ENCODE measurements at regions of chr1 and their contacts with region 1.

Region 1: GRCh38 chr1:116763787-116764465 is 9.7 kb downstream of the CD2 start:
- DNase-seq: no peak
- H3K4me3 Mint-ChIP-seq: peak overlapping the region; percentile 84
- H3K27ac Mint-ChIP-seq: peak overlapping the region; percentile 100
- H3K4me1 Mint-ChIP-seq: peaks cover 88% of the 10 kb centered on the region
- H3K27me3 Mint-ChIP-seq: no peaks in the 10 kb centered on the region

Region 2: GRCh38 chr1:116806245-116806644 is 42.3 kb after region 1 on chr1:
- intact Hi-C with region 1: loop called (anchors 1 kb)
- DNase-seq: peak; percentile 36
- H3K4me3 Mint-ChIP-seq: peak overlapping the region; percentile 79
- H3K27ac Mint-ChIP-seq: peak overlapping the region; percentile 90
- H3K4me1 Mint-ChIP-seq: peaks cover 84% of the 10 kb centered on the region
- H3K27me3 Mint-ChIP-seq: no peaks in the 10 kb centered on the region

Region 3: DNA sequence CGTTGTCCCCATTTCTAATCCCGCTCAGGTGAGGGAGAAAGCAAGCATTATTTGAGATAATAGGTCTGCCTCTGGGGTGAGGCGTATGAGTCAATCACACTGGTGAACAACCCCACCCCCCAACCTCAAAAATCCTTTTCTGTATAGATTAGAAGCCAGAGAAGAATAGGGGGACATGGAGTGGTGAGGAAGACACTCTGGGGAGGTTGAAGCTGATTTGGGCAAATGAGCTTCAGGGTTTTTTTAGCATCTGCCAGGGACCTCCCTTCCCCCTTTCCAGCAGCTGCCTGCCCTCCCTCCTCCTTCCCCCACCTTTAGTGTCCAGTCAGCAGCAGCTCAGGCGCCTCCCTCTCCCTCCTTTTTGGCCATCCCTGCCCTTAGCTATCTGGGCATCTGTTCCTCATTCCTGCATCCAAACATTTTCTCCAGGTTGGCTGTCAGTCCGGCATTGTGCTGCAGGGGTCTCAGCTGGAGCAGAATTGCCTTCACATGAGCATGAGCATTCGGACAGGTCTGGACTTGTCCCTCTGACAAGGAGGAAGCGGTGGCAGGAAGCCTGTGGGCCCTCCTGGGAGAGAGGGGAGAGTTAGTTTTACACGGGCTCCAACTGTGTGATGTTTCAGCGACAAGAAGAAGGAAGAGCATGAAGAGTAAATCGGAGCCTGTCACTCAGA is 115.0 kb after region 1 on chr1:
- intact Hi-C with region 1: loop called (anchors 1 kb)
- DNase-seq: no peak
- H3K4me3 Mint-ChIP-seq: no peak overlapping the region
- H3K27ac Mint-ChIP-seq: no peak overlapping the region
- H3K4me1 Mint-ChIP-seq: peaks cover 32% of the 10 kb centered on the region
- H3K27me3 Mint-ChIP-seq: no peaks in the 10 kb centered on the region

Region 4: DNA sequence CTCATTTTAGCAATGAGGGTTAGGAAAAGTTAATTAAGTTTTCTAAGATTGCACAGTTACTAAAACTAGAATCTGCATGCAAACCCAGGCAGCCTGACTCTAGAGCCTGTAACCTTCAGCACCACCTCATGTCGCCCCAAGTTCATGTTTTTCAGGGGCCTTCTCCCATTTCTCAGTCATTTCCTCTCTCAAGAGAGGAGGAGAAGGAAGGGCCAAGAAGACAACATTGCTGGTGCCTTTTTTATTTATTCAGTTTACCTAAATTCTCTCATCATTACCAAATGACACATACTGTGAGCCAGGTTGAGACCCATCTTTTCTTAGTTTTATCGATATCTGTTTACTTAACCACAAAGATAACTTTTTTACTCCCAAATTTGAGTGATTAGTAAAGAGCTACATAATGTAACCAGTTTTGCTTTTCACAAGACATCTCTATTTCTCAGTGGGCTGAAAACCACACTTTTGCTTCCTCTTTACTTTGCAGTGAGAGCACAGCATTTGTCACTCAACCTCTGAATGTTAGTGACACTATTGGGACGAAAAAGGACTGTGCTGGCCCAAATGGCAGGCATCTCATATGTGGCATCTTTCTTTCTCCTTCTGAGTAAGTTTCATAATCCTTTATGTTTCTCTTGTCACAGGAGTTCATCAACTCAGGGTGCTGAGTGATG is 237.5 kb after region 1 on chr1 and contains the start of gene CD101:
- intact Hi-C with region 1: loop called (anchors 5 kb)
- DNase-seq: no peak
- H3K4me3 Mint-ChIP-seq: peak within 1 kb of the TSS; percentile 31
- H3K27ac Mint-ChIP-seq: peak within 1 kb of the TSS; percentile 46
- H3K4me1 Mint-ChIP-seq: peaks cover 37% of the 10 kb centered on the region
- H3K27me3 Mint-ChIP-seq: peaks cover 9% of the 10 kb centered on the region
- total RNA-seq, gene CD101: 0.18 and 0.25 TPM in 2 replicates